ENCODE measurements at regions of chr14 and their contacts with region 1.

Region 1: GRCh38 chr14:24080888-24081738 is 9.8 kb downstream of the CPNE6 start:
- DNase-seq: peak; percentile 46 to 83 (median 68)
- ATAC-seq: peak; percentile 89
- H3K4me3 ChIP-seq: peak overlapping the region; percentile 48 to 68
- H3K4me3 Mint-ChIP-seq: peak overlapping the region; percentile 87
- H3K27ac ChIP-seq: peak overlapping the region in 1 of 2 experiments; percentile 72
- H3K27ac Mint-ChIP-seq: peak overlapping the region; percentile 88
- H3K4me1 ChIP-seq: peaks cover 14% of the 10 kb centered on the region
- H3K4me1 Mint-ChIP-seq: peaks cover 21% of the 10 kb centered on the region
- H3K27me3 ChIP-seq: no peaks in the 10 kb centered on the region
- H3K27me3 Mint-ChIP-seq: no peaks in the 10 kb centered on the region
- CTCF ChIP-seq: no peak

Region 2: GRCh38 chr14:22836301-22837113 is 1244.6 kb before region 1 on chr14 and contains the start of gene MMP14:
- CTCF ChIA-PET with region 1: no interaction called
- POLR2A ChIA-PET with region 1: no interaction called
- intact Hi-C with region 1: loop called in 1 of 2 experiments (anchors 5 kb)
- DNase-seq: no peak
- ATAC-seq: no peak
- H3K4me3 ChIP-seq: peak within 1 kb of the TSS; percentile 41 to 46
- H3K4me3 Mint-ChIP-seq: peak within 1 kb of the TSS; percentile 85
- H3K27ac ChIP-seq: no peak within 1 kb of the TSS
- H3K27ac Mint-ChIP-seq: peak within 1 kb of the TSS; percentile 50
- H3K4me1 ChIP-seq: peaks cover 19% of the 10 kb centered on the region
- H3K4me1 Mint-ChIP-seq: peaks cover 15% of the 10 kb centered on the region
- H3K27me3 ChIP-seq: peaks cover 0 to 9% of the 10 kb centered on the region in 2 experiments
- H3K27me3 Mint-ChIP-seq: peaks cover 12% of the 10 kb centered on the region
- CTCF ChIP-seq: no peak
- total RNA-seq, gene MMP14: 1.4 TPM

Region 3: GRCh38 chr14:24093901-24094761 is 13.0 kb after region 1 on chr14 and contains the start of gene PCK2:
- CTCF ChIA-PET with region 1: interaction called, 155 read pairs
- POLR2A ChIA-PET with region 1: interaction called, 41 read pairs
- intact Hi-C with region 1: loop called in 1 of 2 experiments (anchors 1 kb)
- DNase-seq: peak; percentile 39 to 82 (median 68)
- ATAC-seq: peak; percentile 79
- H3K4me3 ChIP-seq: peak within 1 kb of the TSS; percentile 69 to 99
- H3K4me3 Mint-ChIP-seq: peak within 1 kb of the TSS; percentile 98
- H3K27ac ChIP-seq: peak within 1 kb of the TSS; percentile 69 to 76
- H3K27ac Mint-ChIP-seq: peak within 1 kb of the TSS; percentile 98
- H3K4me1 ChIP-seq: peaks cover 19% of the 10 kb centered on the region
- H3K4me1 Mint-ChIP-seq: peaks cover 37% of the 10 kb centered on the region
- H3K27me3 ChIP-seq: no peaks in the 10 kb centered on the region
- H3K27me3 Mint-ChIP-seq: no peaks in the 10 kb centered on the region
- CTCF ChIP-seq: no peak
- total RNA-seq, gene PCK2: 4.9 to 5.2 TPM

Region 4: GRCh38 chr14:24135834-24136542 is 54.9 kb after region 1 on chr14 and contains the start of gene PSME1:
- CTCF ChIA-PET with region 1: no interaction called
- POLR2A ChIA-PET with region 1: interaction called, 10 read pairs
- intact Hi-C with region 1: no loop called
- DNase-seq: peak; percentile 89 to 97 (median 94)
- ATAC-seq: peak; percentile 98
- H3K4me3 ChIP-seq: peak within 1 kb of the TSS; percentile 78 to 91
- H3K4me3 Mint-ChIP-seq: peak within 1 kb of the TSS; percentile 90
- H3K27ac ChIP-seq: peak within 1 kb of the TSS; percentile 81 to 83
- H3K27ac Mint-ChIP-seq: peak within 1 kb of the TSS; percentile 93
- H3K4me1 ChIP-seq: peaks cover 54% of the 10 kb centered on the region
- H3K4me1 Mint-ChIP-seq: peaks cover 65% of the 10 kb centered on the region
- H3K27me3 ChIP-seq: no peaks in the 10 kb centered on the region
- H3K27me3 Mint-ChIP-seq: no peaks in the 10 kb centered on the region
- CTCF ChIP-seq: no peak
- total RNA-seq, gene PSME1: 200 to 207 TPM